ENCODE measurements at regions of chr12 and their contacts with region 1.

Region 1: GRCh38 chr12:80129895-80130530 is 30.7 kb downstream of the OTOGL start:
- DNase-seq: no peak
- H3K4me3 ChIP-seq: no peak overlapping the region
- CTCF ChIP-seq: no peak
- POLR2A ChIP-seq: no peak

Region 2: DNA sequence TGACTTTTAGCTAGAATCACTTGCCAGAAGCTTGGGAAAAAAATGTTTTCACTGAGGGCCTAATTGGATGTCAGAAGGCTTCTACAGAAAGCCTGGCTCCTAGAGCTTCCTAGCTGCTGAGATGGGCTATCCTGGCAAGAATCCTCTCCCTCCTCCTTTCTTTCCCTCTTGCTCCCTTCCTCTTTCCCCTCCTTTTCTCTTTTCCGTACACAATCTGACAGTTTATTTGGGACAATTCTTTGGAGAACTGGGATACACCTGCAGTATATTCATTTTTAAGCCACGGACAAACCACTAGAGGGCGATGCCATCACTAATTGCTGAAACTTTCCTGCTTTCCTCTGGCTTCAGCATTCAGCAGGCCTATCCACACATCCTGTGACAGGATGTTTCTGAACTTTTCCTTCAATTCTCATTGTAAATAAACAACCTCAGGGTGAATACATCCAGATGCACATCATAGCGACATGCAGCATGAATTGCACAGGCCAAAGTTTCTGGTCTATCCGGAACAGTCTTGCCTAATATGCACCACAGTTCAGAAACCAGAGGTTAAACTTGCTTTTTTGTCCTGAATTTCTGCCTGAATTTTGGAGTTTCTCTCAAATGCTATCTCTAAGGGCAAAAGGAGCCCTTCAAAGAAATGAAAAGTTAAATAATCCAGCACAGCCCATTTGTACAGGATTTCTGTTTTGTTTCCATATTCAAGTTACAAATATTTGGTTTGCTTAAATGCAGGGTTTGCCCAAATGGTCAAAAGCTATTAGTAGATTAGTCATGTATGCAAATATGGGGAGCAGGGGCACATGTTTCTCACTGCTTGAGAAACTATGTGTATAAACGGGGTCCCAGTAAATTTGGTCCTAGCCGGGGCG is 582.0 kb before region 1 on chr12:
- intact Hi-C with region 1: loop called (anchors 5 kb)
- DNase-seq: peak in 1 of 2 donors; percentile 47
- H3K4me3 ChIP-seq: no peak overlapping the region
- CTCF ChIP-seq: no peak
- POLR2A ChIP-seq: no peak

Measured in lower leg skin (tissue), 4 donors.